Activated CD4-positive, alpha-beta T cell treated with anti-CD3 and anti-CD28 coated beads for 36 hours (primary cell): ENCODE measurements at regions of chr11 and their contacts with region 1.

Region 1: DNA sequence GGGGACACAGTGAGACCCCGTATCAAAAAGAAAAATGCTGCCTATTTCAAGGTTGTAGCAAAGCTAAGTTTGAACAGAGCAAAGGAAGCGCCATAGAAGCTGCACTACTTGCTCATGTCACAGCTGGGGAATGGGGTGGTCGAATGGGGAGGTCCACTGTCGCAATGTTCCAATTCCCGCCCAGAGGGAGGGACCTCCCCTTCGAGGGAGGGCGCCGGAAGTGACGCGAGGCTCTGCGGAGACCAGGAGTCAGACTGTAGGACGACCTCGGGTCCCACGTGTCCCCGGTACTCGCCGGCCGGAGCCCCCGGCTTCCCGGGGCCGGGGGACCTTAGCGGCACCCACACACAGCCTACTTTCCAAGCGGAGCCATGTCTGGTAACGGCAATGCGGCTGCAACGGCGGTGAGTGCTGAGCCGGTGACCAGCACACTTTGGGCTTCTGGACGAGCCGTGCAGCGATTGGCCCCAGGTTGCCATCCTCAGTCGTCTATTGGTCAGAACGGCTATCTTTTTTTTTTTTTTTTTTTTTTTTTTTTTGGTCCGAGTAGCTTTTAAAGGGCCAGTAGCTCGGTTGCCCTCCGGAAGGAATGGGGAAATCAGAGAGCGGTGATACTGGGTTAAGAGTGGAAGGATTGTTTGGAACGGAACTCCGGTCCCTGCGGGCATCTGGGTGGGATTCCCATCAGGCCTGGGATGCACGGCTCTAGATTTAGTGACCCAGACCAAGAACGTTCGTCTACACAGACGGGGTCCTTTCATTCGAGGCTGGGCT is at the start of gene HMBS:
- DNase-seq: peak; percentile 96
- ATAC-seq: peak; percentile 94
- H3K4me3 Mint-ChIP-seq: peak within 1 kb of the TSS; percentile 97
- H3K27ac Mint-ChIP-seq: peak within 1 kb of the TSS; percentile 92
- H3K4me1 Mint-ChIP-seq: peaks cover 22% of the 10 kb centered on the region
- H3K27me3 Mint-ChIP-seq: no peaks in the 10 kb centered on the region
- total RNA-seq, gene HMBS: 39.8 to 41.8 TPM

Region 2: DNA sequence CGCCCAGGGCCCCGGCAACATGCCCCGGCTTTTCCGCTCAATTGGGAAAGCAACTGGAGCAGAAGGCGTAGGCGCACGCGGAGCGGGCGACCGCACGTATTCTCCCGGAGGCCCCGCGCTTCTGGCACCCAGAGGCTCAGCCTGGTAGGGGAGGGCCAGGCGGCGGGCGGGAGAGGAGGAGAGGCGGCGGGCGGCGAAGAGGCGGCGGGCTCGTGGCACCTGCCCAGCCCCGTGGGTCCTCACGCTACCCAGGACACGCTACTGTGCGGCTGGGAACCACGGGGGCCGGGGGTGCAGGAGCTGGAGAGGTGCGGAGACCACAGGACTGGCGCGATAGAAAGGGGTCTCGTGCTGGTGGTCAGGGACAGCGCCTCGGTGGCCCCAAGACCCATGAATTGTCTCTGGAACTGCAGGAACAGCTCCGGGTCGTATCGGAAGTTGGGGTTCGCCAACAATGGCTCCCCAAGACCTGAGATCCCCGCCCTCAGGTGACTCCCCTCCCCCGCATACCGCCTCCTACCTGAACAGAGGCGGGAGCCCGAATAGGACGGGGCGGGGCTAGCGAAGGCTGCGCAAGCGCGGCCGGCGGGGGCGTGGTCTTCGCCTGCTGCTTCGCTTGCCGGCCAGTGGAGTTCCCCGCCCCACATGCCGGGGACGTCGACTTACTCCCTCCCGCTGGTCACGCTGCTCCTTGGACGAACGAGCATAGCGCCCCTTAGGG is 54.4 kb before region 1 on chr11 and contains the start of gene SLC37A4:
- CTCF ChIA-PET with region 1: interaction called, 3 read pairs
- POLR2A ChIA-PET with region 1: no interaction called
- intact Hi-C with region 1: loop called in 1 of 2 experiments (anchors 1 kb)
- DNase-seq: peak; percentile 99
- ATAC-seq: peak; percentile 94
- H3K4me3 Mint-ChIP-seq: peak within 1 kb of the TSS; percentile 76
- H3K27ac Mint-ChIP-seq: peak within 1 kb of the TSS; percentile 86
- H3K4me1 Mint-ChIP-seq: peaks cover 19% of the 10 kb centered on the region
- H3K27me3 Mint-ChIP-seq: no peaks in the 10 kb centered on the region
- total RNA-seq, gene SLC37A4: 26.2 to 36.2 TPM

Region 3: DNA sequence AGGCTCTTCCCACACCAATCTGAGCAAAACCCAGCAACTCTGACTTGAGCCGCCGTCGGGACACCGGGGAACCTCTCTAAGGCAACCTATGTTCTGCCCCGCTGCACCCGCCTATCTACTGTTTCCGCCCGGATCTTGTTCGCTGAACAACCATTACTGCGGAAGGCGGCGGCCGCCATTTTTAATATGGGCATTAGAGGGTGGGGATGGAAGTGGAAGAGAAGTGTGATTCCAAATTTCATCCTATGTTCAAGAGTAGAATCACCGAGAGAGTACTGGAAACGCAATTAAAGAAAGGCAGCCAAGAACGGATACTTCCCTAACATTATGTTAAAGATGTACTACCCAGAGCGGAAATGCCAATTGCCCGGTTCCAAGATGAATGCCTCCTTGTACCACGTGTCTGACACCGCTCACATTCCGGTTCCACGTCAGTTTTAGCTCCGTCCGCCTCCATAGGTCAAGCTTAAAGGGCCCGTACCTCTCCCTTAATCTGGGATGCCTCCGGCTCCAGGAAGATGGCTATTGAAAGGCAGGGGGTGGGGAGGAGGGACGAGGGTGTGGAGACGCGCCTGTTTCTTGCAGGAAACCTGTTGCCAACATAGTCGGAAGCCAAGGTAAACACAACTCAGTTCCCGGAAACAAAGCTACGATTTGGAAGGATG is 17.0 kb after region 1 on chr11 and contains the start of gene DPAGT1:
- CTCF ChIA-PET with region 1: interaction called, 12 read pairs
- POLR2A ChIA-PET with region 1: interaction called, 18 read pairs
- intact Hi-C with region 1: loop called (anchors 1 kb)
- DNase-seq: peak; percentile 93
- ATAC-seq: peak; percentile 86
- H3K4me3 Mint-ChIP-seq: peak within 1 kb of the TSS; percentile 95
- H3K27ac Mint-ChIP-seq: peak within 1 kb of the TSS; percentile 100
- H3K4me1 Mint-ChIP-seq: peaks cover 42% of the 10 kb centered on the region
- H3K27me3 Mint-ChIP-seq: no peaks in the 10 kb centered on the region
- total RNA-seq, gene DPAGT1: 57.8 to 73.5 TPM